ENCODE measurements at regions of chr7 and their contacts with region 1.

Region 1: GRCh38 chr7:150898475-150899011 is 46.2 kb downstream of the AOC1 start:
- DNase-seq: no peak
- H3K4me3 ChIP-seq: no peak overlapping the region
- H3K27me3 ChIP-seq: peaks cover 4% of the 10 kb centered on the region
- CTCF ChIP-seq: peak; percentile 96

Region 2: GRCh38 chr7:150814328-150815001 is 84.1 kb before region 1 on chr7:
- CTCF ChIA-PET with region 1: no interaction called
- POLR2A ChIA-PET with region 1: no interaction called
- DNase-seq: no peak
- H3K4me3 ChIP-seq: no peak overlapping the region
- H3K27me3 ChIP-seq: no peaks in the 10 kb centered on the region
- CTCF ChIP-seq: no peak

Region 3: DNA sequence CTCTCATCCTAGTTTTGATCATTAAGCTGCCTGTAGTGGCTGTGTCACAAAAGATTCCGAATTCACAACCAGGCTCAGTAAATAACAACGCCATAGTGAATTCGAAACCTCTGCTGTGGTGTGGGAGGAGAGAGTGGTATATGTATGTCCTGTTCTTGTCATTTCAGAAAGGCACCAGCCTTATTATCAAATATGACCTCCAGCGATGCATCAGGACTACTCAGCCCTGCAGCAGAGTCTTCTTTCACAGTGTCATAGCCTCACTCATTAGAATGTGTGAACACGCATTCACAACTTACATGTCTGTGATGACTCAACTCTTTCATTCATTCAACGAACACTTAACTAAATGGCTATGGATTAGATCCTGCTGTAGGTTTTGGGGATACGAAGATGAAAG is 30.9 kb before region 1 on chr7:
- CTCF ChIA-PET with region 1: no interaction called
- POLR2A ChIA-PET with region 1: no interaction called
- DNase-seq: no peak
- H3K4me3 ChIP-seq: no peak overlapping the region
- H3K27me3 ChIP-seq: no peaks in the 10 kb centered on the region
- CTCF ChIP-seq: no peak

Region 4: GRCh38 chr7:150909200-150909995 is 10.9 kb after region 1 on chr7:
- CTCF ChIA-PET with region 1: interaction called, 22 read pairs
- POLR2A ChIA-PET with region 1: no interaction called
- DNase-seq: no peak
- H3K4me3 ChIP-seq: no peak overlapping the region
- H3K27me3 ChIP-seq: no peaks in the 10 kb centered on the region
- CTCF ChIP-seq: no peak

Measured in BJ (cell line).